MCF 10A (cell line): ENCODE measurements at regions of chr20 and their contacts with region 1.

Region 1: DNA sequence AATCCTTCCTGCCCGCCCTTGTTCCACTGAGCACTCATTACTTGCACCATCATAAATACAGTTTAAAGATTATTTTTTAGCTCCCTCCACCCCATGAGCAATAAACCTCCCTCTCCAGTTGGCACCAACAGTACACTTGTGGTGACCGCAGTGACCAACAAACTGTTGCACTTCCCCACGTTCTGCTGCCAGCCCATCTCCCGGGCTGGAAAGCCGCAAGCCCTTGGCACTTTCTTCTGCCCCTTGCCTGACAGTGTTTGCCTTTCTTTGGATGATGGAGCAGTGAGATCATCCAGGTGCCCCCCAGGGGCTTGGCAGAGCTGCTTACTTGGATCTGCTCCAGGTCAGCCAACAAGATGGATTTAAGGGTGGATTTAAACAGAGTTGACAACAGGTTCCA is 21.6 kb downstream of the KCNB1 start:
- DNase-seq: peak; percentile 96
- H3K4me3 Mint-ChIP-seq: no peak overlapping the region
- H3K27ac Mint-ChIP-seq: peak overlapping the region; percentile 7
- H3K4me1 Mint-ChIP-seq: peaks cover 34% of the 10 kb centered on the region
- H3K27me3 Mint-ChIP-seq: no peaks in the 10 kb centered on the region
- CTCF ChIP-seq: no peak

Region 2: GRCh38 chr20:49424536-49424935 is 36.4 kb before region 1 on chr20:
- CTCF ChIA-PET with region 1: no interaction called
- POLR2A ChIA-PET with region 1: interaction called, 5 read pairs
- intact Hi-C with region 1: loop called (anchors 5 kb)
- DNase-seq: no peak
- H3K4me3 Mint-ChIP-seq: no peak overlapping the region
- H3K27ac Mint-ChIP-seq: no peak overlapping the region
- H3K4me1 Mint-ChIP-seq: peaks cover 29% of the 10 kb centered on the region
- H3K27me3 Mint-ChIP-seq: no peaks in the 10 kb centered on the region
- CTCF ChIP-seq: no peak

Region 3: GRCh38 chr20:49526056-49526455 is 65.1 kb after region 1 on chr20:
- CTCF ChIA-PET with region 1: no interaction called
- POLR2A ChIA-PET with region 1: no interaction called
- intact Hi-C with region 1: no loop called
- DNase-seq: no peak
- H3K4me3 Mint-ChIP-seq: no peak overlapping the region
- H3K27ac Mint-ChIP-seq: no peak overlapping the region
- H3K4me1 Mint-ChIP-seq: peaks cover 18% of the 10 kb centered on the region
- H3K27me3 Mint-ChIP-seq: no peaks in the 10 kb centered on the region
- CTCF ChIP-seq: no peak